Activated B cell treated with CpG ODN at 0.5 μM for 24 hours (primary cell): ENCODE measurements at regions of chr4 and their contacts with region 1.

Region 1: GRCh38 chr4:183840311-183840710 is 64.8 kb upstream of the STOX2 start:
- DNase-seq: peak; percentile 29
- ATAC-seq: no peak
- H3K4me3 Mint-ChIP-seq: no peak overlapping the region
- H3K27ac Mint-ChIP-seq: no peak overlapping the region
- H3K4me1 Mint-ChIP-seq: no peaks in the 10 kb centered on the region
- H3K27me3 Mint-ChIP-seq: peaks cover 13% of the 10 kb centered on the region
- CTCF ChIP-seq: peak; percentile 52

Region 2: DNA sequence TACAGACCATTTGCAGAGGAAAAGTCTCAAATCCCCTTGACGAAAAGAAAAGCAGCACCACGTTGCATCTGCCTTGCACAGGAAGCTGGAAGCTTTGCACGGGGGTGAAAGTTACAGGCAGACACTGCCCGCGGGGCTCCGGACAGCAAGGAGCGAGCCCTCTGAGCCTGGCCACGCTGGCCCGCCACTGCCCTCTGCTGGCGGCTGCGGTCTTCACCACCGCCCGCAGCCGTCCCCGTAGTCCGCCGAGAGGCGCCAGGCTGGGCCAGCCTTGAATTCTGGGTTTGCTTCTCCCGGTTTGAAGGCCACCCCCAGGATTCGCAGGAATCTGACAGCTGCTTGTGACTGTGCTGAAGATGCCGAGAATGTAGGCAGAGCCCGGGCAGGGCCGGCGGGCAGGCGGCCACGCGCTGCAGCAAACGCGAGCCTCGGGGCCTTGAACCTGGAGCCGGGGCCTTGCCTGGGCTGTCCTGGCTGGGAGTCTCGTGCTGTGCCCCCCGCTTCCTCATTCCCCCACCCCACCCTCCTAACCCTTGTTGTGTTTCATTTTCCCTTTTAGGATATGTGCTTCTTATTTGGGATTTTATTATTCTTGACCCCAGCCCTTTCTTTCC is 328.2 kb after region 1 on chr4:
- CTCF ChIA-PET with region 1: interaction called, 3 read pairs
- POLR2A ChIA-PET with region 1: no interaction called
- intact Hi-C with region 1: loop called (anchors 1 kb)
- DNase-seq: peak; percentile 50
- ATAC-seq: peak; percentile 72
- H3K4me3 Mint-ChIP-seq: no peak overlapping the region
- H3K27ac Mint-ChIP-seq: no peak overlapping the region
- H3K4me1 Mint-ChIP-seq: peaks cover 5% of the 10 kb centered on the region
- H3K27me3 Mint-ChIP-seq: peaks cover 52% of the 10 kb centered on the region
- CTCF ChIP-seq: peak; percentile 47

Region 3: DNA sequence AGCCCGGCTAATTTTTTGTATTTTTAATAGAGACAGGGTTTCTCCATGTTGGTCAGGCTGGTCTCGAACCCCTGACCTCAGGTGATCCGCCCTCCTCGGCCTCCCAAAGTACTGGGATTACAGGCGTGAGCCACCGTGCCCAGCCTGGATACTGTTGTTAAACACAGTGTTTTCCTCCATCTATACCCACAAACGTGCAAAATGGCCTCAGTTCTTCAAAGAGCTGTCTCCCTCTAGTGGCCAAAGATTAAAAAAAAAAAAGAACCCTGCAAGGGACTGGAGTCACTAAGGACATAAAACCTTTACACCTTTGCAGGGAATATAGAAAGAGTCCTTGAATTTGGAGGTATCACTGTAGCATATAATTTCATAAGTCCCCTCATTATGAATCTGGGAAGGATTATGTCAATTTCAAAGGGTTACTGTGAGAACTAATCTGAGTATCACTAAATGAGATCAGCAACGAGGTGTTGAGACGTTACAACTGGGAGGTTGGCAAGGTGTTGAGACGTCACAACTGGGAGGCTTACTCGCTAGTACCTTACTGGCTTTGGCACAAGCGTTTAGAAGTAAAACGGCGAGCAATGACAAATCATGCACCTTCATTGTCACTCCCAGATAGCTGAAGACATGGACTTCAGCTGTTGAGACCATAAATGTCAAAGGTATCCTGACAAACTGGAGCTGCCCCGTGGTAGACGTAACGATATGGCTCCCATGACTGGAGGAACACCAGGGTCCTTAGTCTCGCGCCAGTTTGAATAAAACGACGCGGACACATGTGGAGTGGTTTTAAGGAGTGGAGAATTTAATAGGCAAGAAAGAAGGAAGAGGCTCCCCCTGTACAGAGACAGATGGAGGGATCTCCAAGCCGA is 410.7 kb after region 1 on chr4:
- CTCF ChIA-PET with region 1: no interaction called
- POLR2A ChIA-PET with region 1: no interaction called
- intact Hi-C with region 1: loop called (anchors 1 kb)
- DNase-seq: no peak
- ATAC-seq: peak; percentile 61
- H3K4me3 Mint-ChIP-seq: no peak overlapping the region
- H3K27ac Mint-ChIP-seq: no peak overlapping the region
- H3K4me1 Mint-ChIP-seq: peaks cover 4% of the 10 kb centered on the region
- H3K27me3 Mint-ChIP-seq: peaks cover 5% of the 10 kb centered on the region
- CTCF ChIP-seq: no peak

Region 4: GRCh38 chr4:185134307-185134869 is 1294.1 kb after region 1 on chr4:
- CTCF ChIA-PET with region 1: interaction called, 3 read pairs
- POLR2A ChIA-PET with region 1: no interaction called
- intact Hi-C with region 1: loop called (anchors 1 kb)
- DNase-seq: no peak
- ATAC-seq: peak; percentile 56
- H3K4me3 Mint-ChIP-seq: no peak overlapping the region
- H3K27ac Mint-ChIP-seq: no peak overlapping the region
- H3K4me1 Mint-ChIP-seq: no peaks in the 10 kb centered on the region
- H3K27me3 Mint-ChIP-seq: peaks cover 9% of the 10 kb centered on the region
- CTCF ChIP-seq: no peak

Region 5: DNA sequence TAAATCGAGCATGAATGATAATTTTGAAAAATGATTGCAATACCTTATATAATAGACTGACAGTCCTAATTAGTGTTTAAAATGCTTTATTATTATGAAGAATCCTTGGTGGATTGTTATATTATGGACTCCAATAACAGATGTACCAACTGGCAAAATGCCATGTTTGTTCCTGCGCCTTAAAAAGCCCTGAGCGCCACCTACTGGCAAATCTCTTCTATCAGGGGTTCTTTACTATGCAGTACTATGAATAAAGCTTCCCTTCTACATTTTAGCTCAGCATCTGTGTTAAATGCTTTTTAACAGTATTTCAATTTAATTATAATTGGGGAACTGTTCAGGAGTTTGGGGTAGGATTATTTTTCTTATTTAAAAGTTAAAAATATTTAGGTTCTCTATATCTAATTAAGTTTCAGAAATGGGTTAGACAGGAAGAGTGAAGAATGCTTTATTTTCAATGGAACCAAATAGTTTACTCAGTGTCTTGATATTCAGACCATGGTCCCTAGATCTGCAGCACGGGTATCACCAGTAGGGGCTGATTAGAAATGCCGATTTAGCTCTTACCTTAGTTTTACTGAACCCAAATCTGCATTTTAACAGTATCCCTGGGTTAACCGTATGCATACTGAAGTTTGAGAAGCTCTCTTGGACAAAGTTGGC is 1343.4 kb after region 1 on chr4:
- CTCF ChIA-PET with region 1: no interaction called
- POLR2A ChIA-PET with region 1: no interaction called
- intact Hi-C with region 1: loop called (anchors 5 kb)
- DNase-seq: no peak
- ATAC-seq: peak; percentile 66
- H3K4me3 Mint-ChIP-seq: no peak overlapping the region
- H3K27ac Mint-ChIP-seq: no peak overlapping the region
- H3K4me1 Mint-ChIP-seq: peaks cover 9% of the 10 kb centered on the region
- H3K27me3 Mint-ChIP-seq: no peaks in the 10 kb centered on the region
- CTCF ChIP-seq: peak; percentile 72